Activated naive CD4-positive, alpha-beta T cell treated with anti-CD3 and anti-CD28 coated beads for 36 hours (primary cell): ENCODE measurements at regions of chr13 and their contacts with region 1.

Region 1: DNA sequence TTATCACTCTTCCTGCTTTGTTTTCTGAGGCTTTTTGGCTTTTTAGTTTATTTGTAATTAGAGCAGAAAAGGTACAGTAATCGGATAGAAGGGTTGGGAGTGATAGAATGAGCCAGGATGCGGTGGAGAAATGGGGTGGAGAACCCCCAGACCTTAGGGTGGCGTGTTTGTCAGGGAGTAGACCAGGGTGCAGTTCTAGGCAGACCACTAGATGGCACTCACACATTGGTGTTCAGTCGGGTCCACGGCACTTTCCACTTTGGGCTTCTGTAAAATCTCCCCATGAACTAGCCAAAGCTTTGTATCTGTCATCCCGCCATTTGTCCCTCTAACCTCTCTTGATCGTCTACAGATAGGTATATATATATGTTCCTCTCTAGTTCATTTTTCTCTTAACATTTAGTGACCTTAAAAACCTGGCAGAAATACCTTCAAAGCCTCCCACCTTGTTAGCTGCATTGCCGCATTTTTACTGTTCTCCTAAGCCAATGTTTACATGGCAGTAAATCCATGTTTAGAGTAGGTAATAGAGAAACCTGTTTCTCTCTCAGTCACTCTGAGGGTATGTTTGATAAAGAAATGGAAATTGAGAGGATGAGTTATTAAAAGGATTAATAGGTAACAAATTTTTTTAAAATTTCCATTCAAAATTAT is 154.9 kb downstream of the TM9SF2 start:
- DNase-seq: peak; percentile 93
- H3K4me3 Mint-ChIP-seq: peak overlapping the region; percentile 39
- H3K27ac Mint-ChIP-seq: no peak overlapping the region
- H3K4me1 Mint-ChIP-seq: peaks cover 42% of the 10 kb centered on the region
- H3K27me3 Mint-ChIP-seq: no peaks in the 10 kb centered on the region

Region 2: DNA sequence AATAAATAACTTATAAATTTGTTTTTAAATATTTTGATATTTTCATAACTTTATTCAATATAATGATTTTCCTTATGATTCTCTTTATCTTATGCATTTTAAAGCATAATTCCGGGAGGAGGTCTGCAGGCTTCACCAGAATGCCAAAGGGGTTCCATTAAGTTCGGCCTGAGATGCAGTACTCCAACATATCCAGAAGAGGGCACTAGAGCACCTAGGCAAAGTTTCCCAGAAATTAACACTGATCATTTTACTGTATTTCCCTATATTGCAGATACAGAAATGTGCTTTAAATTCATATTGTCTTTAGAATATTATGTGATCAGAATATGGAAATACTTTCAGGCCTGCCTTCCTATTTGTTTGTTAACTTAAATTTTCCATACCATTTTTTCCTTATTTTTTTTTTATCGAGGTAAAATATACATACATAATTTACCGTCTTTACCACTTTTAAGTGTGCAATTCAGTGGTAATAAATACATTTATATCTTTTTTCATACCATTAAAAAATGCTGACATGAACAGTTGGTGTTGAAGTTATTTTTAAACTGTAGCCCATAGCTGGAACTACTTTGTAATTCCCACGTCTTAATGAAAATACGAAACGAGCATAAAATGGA is 213.8 kb before region 1 on chr13:
- CTCF ChIA-PET with region 1: interaction called, 4 read pairs
- intact Hi-C with region 1: loop called (anchors 1 kb)
- DNase-seq: peak; percentile 69
- H3K4me3 Mint-ChIP-seq: no peak overlapping the region
- H3K27ac Mint-ChIP-seq: no peak overlapping the region
- H3K4me1 Mint-ChIP-seq: peaks cover 7% of the 10 kb centered on the region
- H3K27me3 Mint-ChIP-seq: no peaks in the 10 kb centered on the region

Region 3: GRCh38 chr13:99900960-99901359 is 244.7 kb after region 1 on chr13:
- CTCF ChIA-PET with region 1: interaction called, 9 read pairs
- intact Hi-C with region 1: loop called (anchors 1 kb)
- DNase-seq: no peak
- H3K4me3 Mint-ChIP-seq: no peak overlapping the region
- H3K27ac Mint-ChIP-seq: no peak overlapping the region
- H3K4me1 Mint-ChIP-seq: no peaks in the 10 kb centered on the region
- H3K27me3 Mint-ChIP-seq: peaks cover 50% of the 10 kb centered on the region

Region 4: DNA sequence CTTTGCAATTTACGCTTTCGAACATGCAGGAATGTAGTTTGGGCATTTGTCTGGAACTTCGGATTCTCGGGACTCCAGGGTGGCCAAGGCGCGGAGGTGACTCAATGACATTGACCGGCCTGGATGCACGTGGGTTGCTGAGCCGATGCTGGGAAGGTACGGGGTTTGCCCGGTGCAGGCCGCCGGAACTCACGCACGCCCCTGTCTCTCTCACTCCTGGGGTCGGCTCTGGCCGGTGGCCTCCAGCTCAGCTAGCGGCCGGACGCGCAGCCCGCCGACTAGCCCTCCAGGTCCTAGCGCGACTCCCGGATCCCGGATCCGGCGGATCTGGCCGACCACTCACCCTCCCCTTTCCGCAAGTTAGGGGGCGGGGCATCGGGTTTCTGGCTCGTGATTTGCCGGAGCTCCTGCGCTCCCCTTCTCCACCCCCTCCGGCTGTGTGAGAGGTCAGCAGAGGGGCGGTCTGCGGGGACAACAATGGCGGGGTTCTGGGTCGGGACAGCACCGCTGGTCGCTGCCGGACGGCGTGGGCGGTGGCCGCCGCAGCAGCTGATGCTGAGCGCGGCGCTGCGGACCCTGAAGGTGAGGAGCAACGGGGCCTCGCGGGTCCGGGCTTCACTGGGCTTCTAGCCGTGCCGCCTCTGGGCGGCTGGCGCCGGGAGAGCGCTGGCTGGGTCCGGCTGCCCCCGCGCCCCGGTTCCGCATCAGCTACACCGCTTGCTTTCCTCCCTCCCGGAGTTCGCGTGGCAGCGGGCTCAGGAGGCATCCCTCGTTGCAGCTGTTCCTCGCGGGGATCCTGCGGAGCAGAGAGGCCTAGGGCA is 432.6 kb after region 1 on chr13 and contains the start of gene PCCA:
- CTCF ChIA-PET with region 1: interaction called, 3 read pairs
- intact Hi-C with region 1: loop called (anchors 1 kb)
- DNase-seq: peak; percentile 86
- H3K4me3 Mint-ChIP-seq: peak within 1 kb of the TSS; percentile 93
- H3K27ac Mint-ChIP-seq: peak within 1 kb of the TSS; percentile 37
- H3K4me1 Mint-ChIP-seq: peaks cover 19% of the 10 kb centered on the region
- H3K27me3 Mint-ChIP-seq: no peaks in the 10 kb centered on the region
- total RNA-seq, gene PCCA: 6.8 to 8.1 TPM

Region 5: GRCh38 chr13:100514788-100515409 is 858.7 kb after region 1 on chr13:
- CTCF ChIA-PET with region 1: interaction called, 22 read pairs
- intact Hi-C with region 1: loop called (anchors 1 kb)
- DNase-seq: peak; percentile 85
- H3K4me3 Mint-ChIP-seq: no peak overlapping the region
- H3K27ac Mint-ChIP-seq: no peak overlapping the region
- H3K4me1 Mint-ChIP-seq: peaks cover 9% of the 10 kb centered on the region
- H3K27me3 Mint-ChIP-seq: no peaks in the 10 kb centered on the region

Region 6: GRCh38 chr13:101127741-101128353 is 1471.6 kb after region 1 on chr13:
- CTCF ChIA-PET with region 1: no interaction called
- intact Hi-C with region 1: loop called (anchors 1 kb)
- DNase-seq: peak; percentile 34
- H3K4me3 Mint-ChIP-seq: no peak overlapping the region
- H3K27ac Mint-ChIP-seq: no peak overlapping the region
- H3K4me1 Mint-ChIP-seq: peaks cover 2% of the 10 kb centered on the region
- H3K27me3 Mint-ChIP-seq: peaks cover 3% of the 10 kb centered on the region